Heart left ventricle (tissue), 16 donors: ENCODE measurements at regions of chr17 and their contacts with region 1.

Region 1: GRCh38 chr17:58447039-58447975 is 30.0 kb upstream of the RNF43 start:
- DNase-seq: peak; percentile 14 to 76 (median 60)
- ATAC-seq: peak; percentile 75 to 94 (median 88)
- H3K4me3 ChIP-seq: no peak overlapping the region
- H3K27ac ChIP-seq: no peak overlapping the region
- H3K4me1 ChIP-seq: no peaks in the 10 kb centered on the region
- H3K27me3 ChIP-seq: no peaks in the 10 kb centered on the region
- CTCF ChIP-seq: peak; percentile 40 to 68 (median 56)
- POLR2A ChIP-seq: no peak

Region 2: GRCh38 chr17:58249270-58250133 is 197.8 kb before region 1 on chr17:
- intact Hi-C with region 1: loop called in 3 of 10 experiments (anchors 5 to 10 kb)
- DNase-seq: peak; percentile 59 to 88 (median 66)
- ATAC-seq: peak; percentile 67 to 93 (median 88)
- H3K4me3 ChIP-seq: peak overlapping the region; percentile 6 to 66 (median 48)
- H3K27ac ChIP-seq: no peak overlapping the region
- H3K4me1 ChIP-seq: peaks cover 4 to 11% (median 6%) of the 10 kb centered on the region in 12 donors
- H3K27me3 ChIP-seq: peaks cover 4 to 73% (median 22%) of the 10 kb centered on the region in 9 donors
- CTCF ChIP-seq: peak; percentile 90 to 98 (median 92)
- POLR2A ChIP-seq: no peak

Region 3: GRCh38 chr17:58277107-58277801 is 170.1 kb before region 1 on chr17:
- intact Hi-C with region 1: loop called in 1 of 10 experiments (anchors 10 kb)
- DNase-seq: no peak
- ATAC-seq: no peak
- H3K4me3 ChIP-seq: no peak overlapping the region
- H3K27ac ChIP-seq: no peak overlapping the region
- H3K4me1 ChIP-seq: peaks cover 0 to 15% (median 1%) of the 10 kb centered on the region in 12 donors
- H3K27me3 ChIP-seq: peaks cover 0 to 22% (median 6%) of the 10 kb centered on the region in 9 donors
- CTCF ChIP-seq: peak in 8 of 12 donors; percentile 15 to 49 (median 28)
- POLR2A ChIP-seq: no peak

Region 4: GRCh38 chr17:58303971-58304725 is 143.2 kb before region 1 on chr17:
- intact Hi-C with region 1: loop called in 3 of 10 experiments (anchors 5 to 10 kb)
- DNase-seq: peak in 1 of 5 donors; percentile 27
- ATAC-seq: peak; percentile 56 to 75 (median 60)
- H3K4me3 ChIP-seq: no peak overlapping the region
- H3K27ac ChIP-seq: no peak overlapping the region
- H3K4me1 ChIP-seq: peaks cover 0 to 4% (median 0%) of the 10 kb centered on the region in 12 donors
- H3K27me3 ChIP-seq: peaks cover 0 to 4% (median 0%) of the 10 kb centered on the region in 9 donors
- CTCF ChIP-seq: peak; percentile 43 to 67 (median 54)
- POLR2A ChIP-seq: no peak

Region 5: GRCh38 chr17:58317421-58318064 is 129.8 kb before region 1 on chr17:
- intact Hi-C with region 1: loop called in 4 of 10 experiments (anchors 5 to 10 kb)
- DNase-seq: peak in 3 of 5 donors; percentile 23 to 44 (median 30)
- ATAC-seq: peak in 3 of 4 donors; percentile 50 to 63 (median 51)
- H3K4me3 ChIP-seq: no peak overlapping the region
- H3K27ac ChIP-seq: peak overlapping the region in 1 of 12 donors; percentile 48
- H3K4me1 ChIP-seq: peaks cover 0 to 3% (median 0%) of the 10 kb centered on the region in 12 donors
- H3K27me3 ChIP-seq: no peaks in the 10 kb centered on the region
- CTCF ChIP-seq: peak in 11 of 12 donors; percentile 23 to 60 (median 43)
- POLR2A ChIP-seq: no peak

Region 6: GRCh38 chr17:58402047-58402446 is 45.3 kb before region 1 on chr17:
- intact Hi-C with region 1: no loop called
- DNase-seq: no peak
- ATAC-seq: no peak
- H3K4me3 ChIP-seq: no peak overlapping the region
- H3K27ac ChIP-seq: no peak overlapping the region
- H3K4me1 ChIP-seq: no peaks in the 10 kb centered on the region
- H3K27me3 ChIP-seq: peaks cover 0 to 7% (median 0%) of the 10 kb centered on the region in 9 donors
- CTCF ChIP-seq: no peak
- POLR2A ChIP-seq: no peak

Region 7: GRCh38 chr17:58427807-58428206 is 19.5 kb before region 1 on chr17:
- intact Hi-C with region 1: loop called in 1 of 10 experiments (anchors 2 kb)
- DNase-seq: no peak
- ATAC-seq: no peak
- H3K4me3 ChIP-seq: no peak overlapping the region
- H3K27ac ChIP-seq: no peak overlapping the region
- H3K4me1 ChIP-seq: no peaks in the 10 kb centered on the region
- H3K27me3 ChIP-seq: peaks cover 0 to 11% (median 0%) of the 10 kb centered on the region in 9 donors
- CTCF ChIP-seq: no peak
- POLR2A ChIP-seq: no peak

Region 8: GRCh38 chr17:58487589-58488427 is 40.5 kb after region 1 on chr17 and contains the start of gene HSF5:
- intact Hi-C with region 1: no loop called
- DNase-seq: peak in 2 of 5 donors; percentile 38 to 73
- ATAC-seq: peak in 2 of 4 donors; percentile 28 to 67
- H3K4me3 ChIP-seq: peak within 1 kb of the TSS in 1 of 12 donors; percentile 51
- H3K27ac ChIP-seq: no peak within 1 kb of the TSS
- H3K4me1 ChIP-seq: peaks cover 0 to 10% (median 0%) of the 10 kb centered on the region in 12 donors
- H3K27me3 ChIP-seq: no peaks in the 10 kb centered on the region
- CTCF ChIP-seq: peak in 5 of 12 donors; percentile 10 to 28 (median 13)
- POLR2A ChIP-seq: no peak
- total RNA-seq, gene HSF5: 0.06 to 0.19 TPM in 2 of 9 donors, not detected in the others